ENCODE measurements at regions of chr18 and their contacts with region 1.

Region 1: DNA sequence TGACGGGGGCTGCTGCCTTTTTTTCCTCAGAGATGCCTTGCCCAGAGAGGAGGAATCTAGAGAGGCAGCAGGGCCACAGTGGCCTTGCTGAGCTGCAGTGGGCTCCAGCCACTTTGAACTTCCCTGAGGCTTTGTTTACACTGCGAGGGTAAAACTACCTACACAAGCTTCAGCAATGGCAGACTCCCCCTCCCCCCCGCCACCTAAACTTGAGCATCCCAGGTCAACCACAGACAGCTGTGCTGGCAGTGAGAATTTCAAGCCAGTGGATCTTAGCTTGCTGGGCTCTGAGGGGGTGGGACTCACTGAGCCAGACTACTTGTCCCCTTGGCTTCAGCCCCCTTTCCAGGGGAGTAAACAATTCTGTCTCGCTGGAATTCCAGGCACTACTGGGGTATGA is 11.8 kb downstream of the SYT4 start:
- DNase-seq: no peak
- H3K4me3 ChIP-seq: no peak overlapping the region
- CTCF ChIP-seq: no peak
- POLR2A ChIP-seq: no peak

Region 2: DNA sequence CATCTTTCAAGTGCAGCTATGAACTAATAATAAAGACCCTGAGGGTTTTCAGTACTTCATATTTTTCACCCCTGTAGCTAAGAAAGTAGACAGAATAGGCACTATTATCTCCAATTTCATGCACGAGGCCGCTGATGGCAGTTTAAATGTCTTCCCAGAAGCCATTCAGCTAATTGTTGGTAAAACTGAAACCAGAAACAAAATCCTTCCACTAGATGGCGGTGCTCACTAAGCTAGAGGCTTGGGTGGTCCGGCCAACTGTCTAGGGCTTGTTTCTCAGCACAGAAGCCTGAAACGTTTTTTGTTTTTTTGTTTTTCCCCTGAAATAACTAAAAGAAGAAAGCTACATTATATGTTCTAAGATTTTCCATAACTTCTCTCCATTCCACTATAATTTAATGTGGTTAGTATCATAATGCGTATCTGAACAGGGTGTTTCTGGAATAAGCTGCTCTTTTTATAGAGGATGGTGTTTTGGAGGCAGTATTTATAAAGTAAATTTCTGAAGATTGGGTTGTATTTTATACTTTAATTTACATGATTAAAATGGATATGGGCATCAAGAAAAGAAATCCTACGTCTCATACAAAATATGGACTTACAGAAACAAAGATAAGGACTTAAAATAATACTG is 1151.0 kb before region 1 on chr18:
- intact Hi-C with region 1: loop called (anchors 10 kb)
- DNase-seq: peak; percentile 64 to 87
- H3K4me3 ChIP-seq: no peak overlapping the region
- CTCF ChIP-seq: peak in 1 of 3 donors; percentile 49
- POLR2A ChIP-seq: no peak

Measured in lower leg skin (tissue), 4 donors.